ENCODE measurements at regions of chr2 and their contacts with region 1.

Region 1: DNA sequence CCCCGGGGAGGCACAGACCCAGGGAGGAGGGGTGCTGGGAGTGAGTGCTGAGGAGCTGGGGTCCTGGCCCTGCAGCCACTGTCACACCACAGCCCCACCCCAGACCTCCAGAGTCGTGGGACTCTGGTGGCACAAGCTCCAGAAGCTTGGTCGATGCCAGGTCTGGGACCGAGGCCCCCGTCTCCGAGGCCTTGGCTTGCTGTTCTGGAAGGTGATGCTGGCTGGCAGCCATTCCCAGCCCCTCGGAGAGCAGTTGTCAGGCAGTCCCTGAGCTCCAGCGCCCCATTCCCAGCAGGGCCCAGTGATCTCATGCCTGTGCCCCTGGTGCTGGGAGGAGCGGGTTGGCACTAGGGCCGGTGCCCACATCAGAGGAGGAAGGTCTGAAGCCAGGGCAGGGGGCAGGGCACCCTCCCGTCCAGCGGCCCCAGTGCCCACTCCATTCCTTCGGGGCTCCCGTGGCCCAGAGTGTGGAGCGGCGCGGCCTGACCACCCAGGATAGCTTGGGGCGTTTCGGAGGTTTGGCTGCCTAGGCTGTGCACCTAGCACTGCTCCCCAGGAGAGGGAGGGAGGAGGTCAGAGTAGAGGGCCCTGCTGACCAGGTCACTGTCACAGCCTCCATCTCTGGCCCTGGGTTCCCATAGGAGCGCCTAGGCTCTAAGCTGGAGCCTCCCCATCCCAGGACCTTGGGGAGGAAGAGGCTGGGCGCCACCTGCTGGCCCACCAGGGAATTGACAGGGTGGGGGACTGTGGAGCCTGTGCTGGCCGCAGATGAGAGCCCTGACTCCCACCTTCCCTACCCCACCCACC is 16.8 kb upstream of the ALPI start:
- DNase-seq: peak; percentile 54
- H3K4me3 Mint-ChIP-seq: no peak overlapping the region
- H3K27ac Mint-ChIP-seq: no peak overlapping the region
- H3K4me1 Mint-ChIP-seq: peaks cover 6% of the 10 kb centered on the region
- H3K27me3 Mint-ChIP-seq: no peaks in the 10 kb centered on the region

Region 2: DNA sequence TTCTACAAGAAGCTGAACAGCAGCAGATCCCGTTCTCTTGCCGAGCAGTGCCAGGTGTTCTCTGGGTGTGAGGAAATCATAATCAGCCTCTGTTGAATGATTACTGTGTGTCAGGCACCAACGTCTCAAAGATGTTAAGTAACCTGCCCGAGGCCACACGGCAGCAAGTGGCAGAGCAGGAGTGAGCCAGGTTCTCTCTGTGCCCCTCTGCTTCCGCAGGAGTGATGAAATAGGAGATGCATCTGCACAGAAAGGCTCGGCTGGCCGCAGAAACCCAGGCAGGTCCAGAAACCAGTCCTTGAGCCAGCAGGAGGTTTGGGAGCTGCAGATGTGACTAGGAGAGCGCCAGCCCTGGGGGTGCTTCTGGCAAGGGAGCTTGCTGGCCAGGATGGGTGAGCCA is 584.5 kb before region 1 on chr2:
- CTCF ChIA-PET with region 1: interaction called, 3 read pairs
- intact Hi-C with region 1: loop called (anchors 2 kb)
- DNase-seq: no peak
- H3K4me3 Mint-ChIP-seq: no peak overlapping the region
- H3K27ac Mint-ChIP-seq: no peak overlapping the region
- H3K4me1 Mint-ChIP-seq: no peaks in the 10 kb centered on the region
- H3K27me3 Mint-ChIP-seq: peaks cover 6% of the 10 kb centered on the region

Region 3: GRCh38 chr2:231900486-231900942 is 538.6 kb before region 1 on chr2:
- CTCF ChIA-PET with region 1: interaction called, 14 read pairs
- intact Hi-C with region 1: no loop called
- DNase-seq: peak; percentile 66
- H3K4me3 Mint-ChIP-seq: no peak overlapping the region
- H3K27ac Mint-ChIP-seq: no peak overlapping the region
- H3K4me1 Mint-ChIP-seq: no peaks in the 10 kb centered on the region
- H3K27me3 Mint-ChIP-seq: no peaks in the 10 kb centered on the region

Region 4: DNA sequence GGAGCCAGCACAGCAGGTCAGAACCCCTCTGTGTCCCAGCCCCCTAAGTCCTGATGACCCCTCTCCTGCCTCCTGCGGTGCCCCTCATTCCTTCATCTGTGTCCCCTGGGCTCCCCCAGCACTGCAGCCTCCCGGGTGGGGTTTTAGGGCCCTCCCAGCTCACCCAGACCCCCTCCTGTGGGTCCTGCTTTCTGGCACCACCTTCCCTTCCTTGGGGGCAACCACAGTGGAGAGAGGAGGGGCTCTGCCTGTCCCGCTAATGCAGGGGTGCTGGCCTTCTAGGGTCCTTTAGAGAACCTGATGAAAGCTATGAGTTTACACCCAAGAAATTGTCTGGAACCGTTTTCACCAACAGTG is 103.3 kb before region 1 on chr2:
- CTCF ChIA-PET with region 1: interaction called, 6 read pairs
- intact Hi-C with region 1: loop called (anchors 1 kb)
- DNase-seq: no peak
- H3K4me3 Mint-ChIP-seq: no peak overlapping the region
- H3K27ac Mint-ChIP-seq: no peak overlapping the region
- H3K4me1 Mint-ChIP-seq: no peaks in the 10 kb centered on the region
- H3K27me3 Mint-ChIP-seq: no peaks in the 10 kb centered on the region

Measured in activated naive CD4-positive, alpha-beta T cell treated with anti-CD3 and anti-CD28 coated beads for 36 hours (primary cell).